ENCODE measurements at regions of chr4 and their contacts with region 1.

Region 1: GRCh38 chr4:163679189-163679588 is 184.7 kb downstream of the TMA16 start:
- DNase-seq: no peak
- ATAC-seq: peak; percentile 77; the same call in 1 of the 2 replicates
- H3K4me3 ChIP-seq: no peak overlapping the region
- H3K27ac ChIP-seq: no peak overlapping the region
- H3K4me1 ChIP-seq: no peaks in the 10 kb centered on the region
- H3K27me3 ChIP-seq: no peaks in the 10 kb centered on the region
- CTCF ChIP-seq: peak; percentile 50

Region 2: DNA sequence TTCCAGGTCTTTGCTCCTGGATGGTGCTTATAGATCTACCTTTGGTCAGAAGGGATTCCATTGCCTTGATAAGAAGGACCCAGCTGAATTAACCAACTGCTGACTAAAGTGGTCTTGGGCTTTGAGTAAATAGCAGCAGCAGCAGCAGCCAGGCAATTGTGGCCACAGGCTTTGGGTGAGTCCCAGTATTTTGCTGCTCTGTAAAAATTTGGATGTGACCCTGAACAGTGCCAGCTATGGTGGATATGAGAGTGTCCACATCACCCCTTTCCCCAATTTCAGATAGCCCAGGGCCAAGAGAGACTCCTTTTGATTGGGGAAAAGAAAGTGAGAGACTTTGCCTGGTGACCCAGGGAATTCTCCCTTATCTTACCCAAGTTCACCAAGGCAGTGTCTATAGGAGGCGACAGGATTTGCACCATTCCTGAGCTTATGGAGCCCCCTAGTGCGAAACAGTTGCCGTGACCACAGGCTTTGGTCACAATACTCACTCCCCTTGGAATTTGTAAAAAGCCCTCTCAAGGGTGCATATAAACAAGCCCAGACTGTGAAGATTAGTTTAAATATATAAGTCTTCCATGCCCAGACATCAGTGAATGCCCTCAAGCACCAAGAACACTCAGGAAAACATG is 333.3 kb after region 1 on chr4:
- CTCF ChIA-PET with region 1: no interaction called
- POLR2A ChIA-PET with region 1: no interaction called
- in situ Hi-C with region 1: no loop called
- intact Hi-C with region 1: loop called (anchors 10 kb)
- DNase-seq: no peak
- ATAC-seq: no peak
- H3K4me3 ChIP-seq: no peak overlapping the region
- H3K27ac ChIP-seq: no peak overlapping the region
- H3K4me1 ChIP-seq: no peaks in the 10 kb centered on the region
- H3K27me3 ChIP-seq: no peaks in the 10 kb centered on the region
- CTCF ChIP-seq: peak; percentile 31

Region 3: DNA sequence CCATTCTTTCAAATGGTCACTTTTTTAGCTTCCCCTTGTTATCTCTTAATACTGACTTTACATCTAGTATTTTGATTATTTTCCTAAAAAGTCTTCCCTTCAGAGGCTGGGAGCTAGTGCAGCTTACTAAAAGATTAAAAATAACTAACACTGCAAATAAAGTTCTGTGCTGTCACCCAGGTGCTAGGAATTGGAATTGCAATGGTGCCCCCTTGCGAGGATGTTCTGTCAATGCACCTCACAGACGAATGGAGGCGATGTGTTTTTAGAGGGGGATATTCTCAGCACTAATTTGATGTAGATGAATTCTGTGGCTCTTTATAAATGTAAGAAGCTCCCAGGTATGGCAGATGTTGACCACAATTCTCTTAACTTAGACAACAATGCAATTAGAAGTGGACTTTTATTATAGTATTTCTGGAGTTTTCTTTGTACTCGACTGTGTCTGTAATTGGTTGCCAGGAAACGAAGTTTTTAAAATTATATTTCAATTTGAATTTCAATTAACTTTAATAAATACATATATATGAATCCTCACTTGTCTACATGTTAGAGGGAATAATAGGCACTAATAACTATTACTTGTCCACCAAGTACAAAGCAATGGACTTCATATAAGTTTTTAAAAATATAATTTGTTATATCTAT is 1052.8 kb after region 1 on chr4:
- CTCF ChIA-PET with region 1: interaction called, 4 read pairs
- POLR2A ChIA-PET with region 1: no interaction called
- in situ Hi-C with region 1: no loop called
- intact Hi-C with region 1: loop called (anchors 10 kb)
- DNase-seq: peak; percentile 25
- ATAC-seq: no peak
- H3K4me3 ChIP-seq: no peak overlapping the region
- H3K27ac ChIP-seq: no peak overlapping the region
- H3K4me1 ChIP-seq: no peaks in the 10 kb centered on the region
- H3K27me3 ChIP-seq: no peaks in the 10 kb centered on the region
- CTCF ChIP-seq: peak; percentile 79

Measured in Panc1 (cell line).